Naive thymus-derived CD4-positive, alpha-beta T cell (primary cell): ENCODE measurements at regions of chr4 and their contacts with region 1.

Region 1: GRCh38 chr4:40199999-40200874 is 3.4 kb downstream of the RHOH start:
- DNase-seq: peak in 8 of 9 donors; percentile 51 to 73 (median 61)
- ATAC-seq: peak; percentile 42
- H3K4me3 ChIP-seq: peak overlapping the region; percentile 96
- H3K4me3 Mint-ChIP-seq: peak overlapping the region; percentile 96 to 100 (median 99)
- H3K27ac ChIP-seq: peak overlapping the region; percentile 100
- H3K27ac Mint-ChIP-seq: peak overlapping the region; percentile 98 to 100 (median 99)
- H3K4me1 ChIP-seq: peaks cover 19 to 20% of the 10 kb centered on the region in 2 donors
- H3K4me1 Mint-ChIP-seq: peaks cover 37 to 54% (median 44%) of the 10 kb centered on the region in 7 donors
- H3K27me3 ChIP-seq: no peaks in the 10 kb centered on the region
- H3K27me3 Mint-ChIP-seq: peaks cover 0 to 5% (median 0%) of the 10 kb centered on the region in 5 donors

Region 2: GRCh38 chr4:39527273-39528060 is 672.8 kb before region 1 on chr4 and contains the start of gene UGDH:
- CTCF ChIA-PET with region 1: no interaction called
- POLR2A ChIA-PET with region 1: no interaction called
- intact Hi-C with region 1: loop called in 1 of 2 experiments (anchors 10 kb)
- DNase-seq: peak; percentile 85 to 95 (median 88)
- ATAC-seq: peak; percentile 99
- H3K4me3 ChIP-seq: peak within 1 kb of the TSS; percentile 81
- H3K4me3 Mint-ChIP-seq: peak within 1 kb of the TSS; percentile 88 to 99 (median 98)
- H3K27ac ChIP-seq: peak within 1 kb of the TSS; percentile 74
- H3K27ac Mint-ChIP-seq: peak within 1 kb of the TSS; percentile 84 to 97 (median 93)
- H3K4me1 ChIP-seq: peaks cover 7 to 10% of the 10 kb centered on the region in 2 donors
- H3K4me1 Mint-ChIP-seq: peaks cover 11 to 26% (median 19%) of the 10 kb centered on the region in 7 donors
- H3K27me3 ChIP-seq: no peaks in the 10 kb centered on the region
- H3K27me3 Mint-ChIP-seq: no peaks in the 10 kb centered on the region
- total RNA-seq, gene UGDH: 6.9 to 20.9 (median 17.7) TPM

Region 3: GRCh38 chr4:39864403-39864802 is 335.8 kb before region 1 on chr4:
- CTCF ChIA-PET with region 1: no interaction called
- POLR2A ChIA-PET with region 1: no interaction called
- intact Hi-C with region 1: no loop called
- DNase-seq: no peak
- ATAC-seq: no peak
- H3K4me3 ChIP-seq: no peak overlapping the region
- H3K4me3 Mint-ChIP-seq: no peak overlapping the region
- H3K27ac ChIP-seq: no peak overlapping the region
- H3K27ac Mint-ChIP-seq: peak overlapping the region in 2 of 9 donors; percentile 28 to 81
- H3K4me1 ChIP-seq: no peaks in the 10 kb centered on the region
- H3K4me1 Mint-ChIP-seq: peaks cover 0 to 5% (median 0%) of the 10 kb centered on the region in 7 donors
- H3K27me3 ChIP-seq: no peaks in the 10 kb centered on the region
- H3K27me3 Mint-ChIP-seq: no peaks in the 10 kb centered on the region

Region 4: DNA sequence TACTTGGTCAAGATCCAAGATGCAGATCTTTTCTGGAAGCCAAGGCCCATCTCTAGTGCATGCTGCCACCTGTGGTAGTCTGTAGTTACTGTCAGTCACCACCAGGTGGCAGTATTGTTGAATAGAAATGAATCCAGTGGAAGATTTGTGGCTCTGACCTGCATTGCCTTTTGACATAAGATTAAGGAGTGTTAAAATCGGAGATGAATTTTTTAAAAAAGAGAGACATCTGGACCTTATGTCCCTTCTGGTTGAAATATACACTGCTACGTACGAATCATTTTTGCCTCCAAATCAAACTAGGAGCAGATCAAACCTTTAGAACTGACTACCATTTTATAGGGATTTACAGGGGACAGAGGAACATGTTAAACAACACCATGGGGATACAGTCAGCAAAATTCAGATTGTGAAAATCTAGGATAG is 50.3 kb before region 1 on chr4:
- CTCF ChIA-PET with region 1: interaction called, 7 read pairs
- POLR2A ChIA-PET with region 1: interaction called, 43 read pairs
- intact Hi-C with region 1: loop called in 1 of 2 experiments (anchors 1 kb)
- DNase-seq: peak; percentile 28 to 85 (median 77)
- ATAC-seq: peak; percentile 98
- H3K4me3 ChIP-seq: no peak overlapping the region
- H3K4me3 Mint-ChIP-seq: peak overlapping the region in 6 of 10 donors; percentile 11 to 64 (median 44)
- H3K27ac ChIP-seq: peak overlapping the region; percentile 0
- H3K27ac Mint-ChIP-seq: peak overlapping the region; percentile 62 to 94 (median 89)
- H3K4me1 ChIP-seq: peaks cover 4 to 42% of the 10 kb centered on the region in 2 donors
- H3K4me1 Mint-ChIP-seq: peaks cover 2 to 52% (median 44%) of the 10 kb centered on the region in 7 donors
- H3K27me3 ChIP-seq: no peaks in the 10 kb centered on the region
- H3K27me3 Mint-ChIP-seq: no peaks in the 10 kb centered on the region

Region 5: DNA sequence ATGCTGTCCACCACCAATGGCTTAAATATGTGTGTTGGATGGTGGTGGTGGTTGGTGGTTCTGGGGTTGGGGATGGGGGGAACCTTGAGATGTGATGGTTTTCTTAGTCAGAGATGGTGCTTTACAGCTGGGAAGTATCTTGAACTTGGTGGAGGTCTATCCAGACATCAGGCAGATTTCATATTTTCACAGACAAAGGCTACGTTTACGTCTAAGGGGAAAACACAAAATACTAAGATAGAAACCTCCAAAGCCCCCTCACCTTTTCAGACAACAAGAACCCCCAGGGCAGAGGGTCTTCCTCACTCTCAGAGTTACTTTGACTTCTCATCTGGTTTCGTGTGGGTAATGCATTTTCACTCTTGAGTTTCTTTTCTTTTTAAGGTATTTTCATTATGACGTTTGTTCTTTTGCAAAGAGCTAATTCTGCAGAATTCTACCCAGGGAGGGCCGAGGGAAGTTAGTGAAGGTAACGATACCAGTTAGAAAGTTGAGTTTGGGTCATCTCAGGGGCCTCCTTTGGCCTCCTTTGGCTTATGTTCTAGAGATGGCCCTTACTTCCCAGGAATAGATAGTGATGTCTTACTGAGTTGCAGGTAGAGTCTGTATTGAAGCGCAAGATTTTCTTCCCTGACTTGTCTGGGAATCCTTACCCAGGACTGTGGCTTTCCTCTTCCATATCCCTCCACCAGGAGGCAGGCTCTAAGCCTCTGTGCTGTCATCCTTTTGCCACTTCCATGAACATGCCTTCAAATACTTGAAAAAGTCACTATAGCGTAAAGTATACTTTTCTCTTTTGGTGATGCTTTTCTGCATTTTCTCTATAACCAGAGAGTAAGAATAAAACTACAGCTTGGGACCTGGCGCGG is 28.5 kb after region 1 on chr4:
- CTCF ChIA-PET with region 1: interaction called, 12 read pairs
- POLR2A ChIA-PET with region 1: interaction called, 90 read pairs
- intact Hi-C with region 1: loop called (anchors 1 kb)
- DNase-seq: peak in 1 of 9 donors; percentile 23
- ATAC-seq: no peak
- H3K4me3 ChIP-seq: peak overlapping the region; percentile 21
- H3K4me3 Mint-ChIP-seq: peak overlapping the region; percentile 74 to 87 (median 81)
- H3K27ac ChIP-seq: peak overlapping the region; percentile 74
- H3K27ac Mint-ChIP-seq: peak overlapping the region; percentile 87 to 99 (median 97)
- H3K4me1 ChIP-seq: peaks cover 86 to 98% of the 10 kb centered on the region in 2 donors
- H3K4me1 Mint-ChIP-seq: peaks cover 58 to 100% (median 90%) of the 10 kb centered on the region in 7 donors
- H3K27me3 ChIP-seq: no peaks in the 10 kb centered on the region
- H3K27me3 Mint-ChIP-seq: no peaks in the 10 kb centered on the region

Region 6: GRCh38 chr4:40255393-40256281 is 55.4 kb after region 1 on chr4:
- CTCF ChIA-PET with region 1: interaction called, 4 read pairs
- POLR2A ChIA-PET with region 1: interaction called, 11 read pairs
- intact Hi-C with region 1: loop called in 1 of 2 experiments (anchors 2 kb)
- DNase-seq: no peak
- ATAC-seq: no peak
- H3K4me3 ChIP-seq: no peak overlapping the region
- H3K4me3 Mint-ChIP-seq: peak overlapping the region; percentile 47 to 93 (median 64)
- H3K27ac ChIP-seq: peak overlapping the region; percentile 58
- H3K27ac Mint-ChIP-seq: peak overlapping the region; percentile 79 to 99 (median 92)
- H3K4me1 ChIP-seq: peaks cover 22 to 68% of the 10 kb centered on the region in 2 donors
- H3K4me1 Mint-ChIP-seq: peaks cover 46 to 83% (median 77%) of the 10 kb centered on the region in 7 donors
- H3K27me3 ChIP-seq: no peaks in the 10 kb centered on the region
- H3K27me3 Mint-ChIP-seq: no peaks in the 10 kb centered on the region

Region 7: GRCh38 chr4:40316782-40317635 is 116.8 kb after region 1 on chr4:
- CTCF ChIA-PET with region 1: interaction called, 12 read pairs
- POLR2A ChIA-PET with region 1: interaction called, 229 read pairs
- intact Hi-C with region 1: loop called in 1 of 2 experiments (anchors 1 kb)
- DNase-seq: peak; percentile 39 to 83 (median 76)
- ATAC-seq: peak; percentile 81
- H3K4me3 ChIP-seq: peak overlapping the region; percentile 75
- H3K4me3 Mint-ChIP-seq: peak overlapping the region; percentile 79 to 93 (median 86)
- H3K27ac ChIP-seq: peak overlapping the region; percentile 92
- H3K27ac Mint-ChIP-seq: peak overlapping the region; percentile 90 to 99 (median 99)
- H3K4me1 ChIP-seq: peaks cover 7 to 19% of the 10 kb centered on the region in 2 donors
- H3K4me1 Mint-ChIP-seq: peaks cover 23 to 71% (median 61%) of the 10 kb centered on the region in 7 donors
- H3K27me3 ChIP-seq: no peaks in the 10 kb centered on the region
- H3K27me3 Mint-ChIP-seq: no peaks in the 10 kb centered on the region

Region 8: DNA sequence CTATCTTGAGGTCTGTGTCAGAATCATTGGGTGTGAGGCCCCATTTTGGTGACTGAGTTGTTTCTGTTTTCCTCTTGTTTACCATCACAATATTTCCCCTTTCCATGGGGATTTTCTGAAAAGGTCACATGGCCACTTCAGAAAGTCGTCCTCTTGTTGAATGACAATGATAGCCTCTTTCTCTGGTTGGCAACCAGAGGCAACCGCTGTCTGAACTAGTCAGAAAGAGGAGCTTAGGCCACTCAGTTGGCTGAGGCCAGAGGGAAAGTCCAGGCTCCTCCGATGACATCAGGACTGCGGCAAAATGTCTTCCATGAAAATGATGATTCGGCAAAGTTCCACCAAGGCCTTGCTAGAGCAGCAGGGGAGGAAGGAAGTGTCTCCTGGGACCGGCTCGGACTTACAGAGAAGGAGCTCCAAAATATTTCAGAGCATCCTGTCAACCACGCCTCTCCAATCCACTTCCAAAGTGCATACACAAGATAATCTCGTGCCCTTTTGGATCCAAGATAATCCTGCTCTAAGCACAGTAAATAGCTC is 448.6 kb after region 1 on chr4:
- CTCF ChIA-PET with region 1: no interaction called
- POLR2A ChIA-PET with region 1: no interaction called
- intact Hi-C with region 1: no loop called
- DNase-seq: no peak
- ATAC-seq: peak; percentile 69
- H3K4me3 ChIP-seq: no peak overlapping the region
- H3K4me3 Mint-ChIP-seq: no peak overlapping the region
- H3K27ac ChIP-seq: no peak overlapping the region
- H3K27ac Mint-ChIP-seq: no peak overlapping the region
- H3K4me1 ChIP-seq: no peaks in the 10 kb centered on the region
- H3K4me1 Mint-ChIP-seq: peaks cover 0 to 4% (median 0%) of the 10 kb centered on the region in 7 donors
- H3K27me3 ChIP-seq: no peaks in the 10 kb centered on the region
- H3K27me3 Mint-ChIP-seq: no peaks in the 10 kb centered on the region